HCT116 (cell line): ENCODE measurements at regions of chr15 and their contacts with region 1.

Region 1: DNA sequence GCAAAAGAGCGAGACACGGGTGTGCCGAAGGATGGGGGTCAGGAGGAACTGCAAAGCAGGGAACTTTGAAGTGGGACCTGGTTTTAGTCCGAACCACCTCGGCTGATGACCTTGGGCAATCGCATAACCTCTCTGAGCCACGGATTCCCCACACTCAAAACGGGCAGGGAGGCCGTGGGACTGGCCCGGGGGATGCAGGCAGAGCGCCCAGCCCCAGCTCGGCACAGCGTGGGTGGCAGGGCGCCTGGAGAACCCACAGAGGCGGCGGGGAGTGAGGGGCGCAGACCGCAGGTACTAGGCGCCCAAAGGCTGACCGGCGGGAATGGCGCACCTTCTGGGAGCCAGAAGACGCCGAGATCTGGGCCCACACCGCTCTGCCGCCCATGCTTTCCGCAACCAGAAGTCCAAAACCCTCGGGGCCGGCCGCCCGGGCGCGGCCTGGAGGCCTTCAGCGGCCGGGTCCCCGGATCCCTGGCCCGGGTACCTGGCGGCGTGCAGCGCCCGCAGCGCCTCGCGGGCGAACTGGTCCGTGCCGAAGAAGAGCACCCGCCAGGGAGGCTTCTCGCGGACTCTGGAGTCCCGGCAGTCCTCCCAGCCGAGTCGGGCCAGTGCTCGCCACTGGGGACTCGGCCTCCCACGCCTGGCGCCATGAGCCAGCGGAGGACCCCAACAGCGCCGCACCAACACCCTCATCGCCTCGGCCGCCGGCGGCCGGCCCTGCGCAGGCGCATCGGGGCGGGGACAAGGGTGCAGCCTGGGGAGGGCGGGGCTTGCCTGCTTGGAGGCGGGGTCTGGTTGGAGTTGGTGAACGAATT is at the start of gene MTFMT:
- DNase-seq: peak; percentile 53
- ATAC-seq: peak; percentile 82
- H3K4me3 ChIP-seq: peak within 1 kb of the TSS; percentile 92 to 96
- H3K27ac ChIP-seq: peak within 1 kb of the TSS; percentile 72
- H3K4me1 ChIP-seq: peaks cover 7 to 30% of the 10 kb centered on the region in 2 experiments; a peak in 3 of 4 replicates
- H3K27me3 ChIP-seq: no peaks in the 10 kb centered on the region
- CTCF ChIP-seq: no peak
- POLR2A ChIP-seq: peak; percentile 92
- RAD21 ChIP-seq: no peak
- total RNA-seq, gene MTFMT: 30.4 TPM

Region 2: DNA sequence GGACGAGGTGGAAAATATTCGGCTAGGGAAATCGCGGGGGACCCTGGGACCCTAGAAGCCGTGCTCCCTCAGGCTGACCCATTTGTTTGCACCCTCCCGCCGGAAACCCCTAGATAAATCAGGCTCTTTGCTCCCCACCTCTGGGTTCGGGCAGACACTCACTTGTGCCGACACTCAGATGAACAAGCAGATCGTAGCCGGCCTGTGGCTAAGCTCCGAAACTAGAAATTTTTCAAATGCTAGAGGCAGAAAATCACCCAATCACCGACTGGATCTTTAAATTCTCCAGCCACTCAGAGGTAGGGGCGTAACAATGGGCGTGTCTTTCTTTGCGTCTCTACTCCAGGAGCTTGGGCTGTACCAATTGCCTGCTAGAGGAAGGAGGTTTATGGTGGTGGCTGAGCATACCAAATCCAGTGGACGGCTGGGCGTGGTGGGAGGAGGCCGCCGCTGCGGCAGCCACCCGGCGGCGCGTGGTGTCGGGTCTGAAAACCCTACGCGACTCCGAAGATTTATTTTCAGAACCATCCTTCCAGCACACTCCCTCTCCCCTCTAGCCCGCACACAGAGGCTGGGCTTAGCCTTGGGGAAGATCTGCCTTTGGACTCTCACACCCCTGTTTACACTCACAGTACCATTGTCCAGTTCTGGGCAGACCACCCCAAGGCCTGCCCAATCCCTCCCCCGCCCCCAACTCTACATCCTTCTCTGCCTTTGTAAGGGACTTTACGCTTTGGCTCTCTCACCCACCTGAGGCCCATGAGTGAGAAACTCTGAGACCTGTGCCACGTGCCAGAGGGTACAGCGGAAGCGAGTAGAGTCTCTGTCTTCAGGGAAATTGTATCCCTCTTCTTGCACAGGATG is 203.5 kb before region 1 on chr15 and contains the start of gene PIF1:
- CTCF ChIA-PET with region 1: no interaction called
- POLR2A ChIA-PET with region 1: no interaction called
- RAD21 ChIA-PET with region 1: no interaction called
- intact Hi-C with region 1: loop called (anchors 1 kb)
- DNase-seq: peak; percentile 98
- ATAC-seq: peak; percentile 95
- H3K4me3 ChIP-seq: peak within 1 kb of the TSS; percentile 55 to 79
- H3K27ac ChIP-seq: peak within 1 kb of the TSS; percentile 73
- H3K4me1 ChIP-seq: peaks cover 7 to 33% of the 10 kb centered on the region in 2 experiments
- H3K27me3 ChIP-seq: no peaks in the 10 kb centered on the region
- CTCF ChIP-seq: no peak
- POLR2A ChIP-seq: peak; percentile 87
- RAD21 ChIP-seq: no peak
- total RNA-seq, gene PIF1: 34.9 TPM

Region 3: GRCh38 chr15:65077981-65078352 is 48.8 kb after region 1 on chr15:
- CTCF ChIA-PET with region 1: interaction called, 13 read pairs
- POLR2A ChIA-PET with region 1: no interaction called
- RAD21 ChIA-PET with region 1: no interaction called
- intact Hi-C with region 1: loop called (anchors 1 kb)
- DNase-seq: peak; percentile 48
- ATAC-seq: peak; percentile 94
- H3K4me3 ChIP-seq: no peak overlapping the region
- H3K27ac ChIP-seq: no peak overlapping the region
- H3K4me1 ChIP-seq: peaks cover 3 to 13% of the 10 kb centered on the region in 2 experiments; a peak in 2 of 4 replicates
- H3K27me3 ChIP-seq: no peaks in the 10 kb centered on the region; the same call in 1 of the 2 replicates
- CTCF ChIP-seq: peak; percentile 47 to 82 (median 53)
- POLR2A ChIP-seq: no peak
- RAD21 ChIP-seq: peak; percentile 67

Region 4: GRCh38 chr15:65101411-65101890 is 72.3 kb after region 1 on chr15:
- CTCF ChIA-PET with region 1: interaction called, 10 read pairs
- POLR2A ChIA-PET with region 1: no interaction called
- RAD21 ChIA-PET with region 1: interaction called in 1 of 2 experiments, 4 read pairs
- intact Hi-C with region 1: loop called (anchors 1 kb)
- DNase-seq: peak; percentile 22
- ATAC-seq: peak; percentile 87
- H3K4me3 ChIP-seq: no peak overlapping the region
- H3K27ac ChIP-seq: no peak overlapping the region
- H3K4me1 ChIP-seq: no peaks in the 10 kb centered on the region
- H3K27me3 ChIP-seq: no peaks in the 10 kb centered on the region
- CTCF ChIP-seq: peak; percentile 69 to 92 (median 84)
- POLR2A ChIP-seq: no peak
- RAD21 ChIP-seq: peak; percentile 76

Region 5: GRCh38 chr15:65384895-65385858 is 356.0 kb after region 1 on chr15:
- CTCF ChIA-PET with region 1: no interaction called
- POLR2A ChIA-PET with region 1: no interaction called
- RAD21 ChIA-PET with region 1: no interaction called
- intact Hi-C with region 1: loop called (anchors 1 kb)
- DNase-seq: peak; percentile 74
- ATAC-seq: peak; percentile 87
- H3K4me3 ChIP-seq: peak overlapping the region; percentile 39 to 59
- H3K27ac ChIP-seq: peak overlapping the region; percentile 70
- H3K4me1 ChIP-seq: peaks cover 8 to 21% of the 10 kb centered on the region in 2 experiments
- H3K27me3 ChIP-seq: no peaks in the 10 kb centered on the region; the same call in 1 of the 2 replicates
- CTCF ChIP-seq: peak; percentile 88 to 97 (median 93)
- POLR2A ChIP-seq: no peak
- RAD21 ChIP-seq: peak; percentile 93